Heart right ventricle (tissue), 16 donors: ENCODE measurements at regions of chr13 and their contacts with region 1.

Region 1: GRCh38 chr13:24307211-24308067 is 1.9 kb upstream of the C1QTNF9 start:
- DNase-seq: peak in 1 of 2 donors; percentile 21
- ATAC-seq: peak; percentile 26 to 70 (median 58)
- H3K4me3 ChIP-seq: no peak overlapping the region
- H3K27ac ChIP-seq: peak overlapping the region in 8 of 10 donors; percentile 23 to 80 (median 62)
- H3K4me1 ChIP-seq: peaks cover 0 to 70% (median 29%) of the 10 kb centered on the region in 9 donors
- H3K27me3 ChIP-seq: peaks cover 0 to 3% (median 0%) of the 10 kb centered on the region in 7 donors
- CTCF ChIP-seq: no peak

Region 2: GRCh38 chr13:24270639-24271141 is 36.7 kb before region 1 on chr13:
- intact Hi-C with region 1: loop called in 1 of 10 experiments (anchors 5 kb)
- DNase-seq: peak; percentile 68
- ATAC-seq: peak; percentile 48 to 85 (median 76)
- H3K4me3 ChIP-seq: peak overlapping the region in 9 of 10 donors; percentile 30 to 58 (median 50)
- H3K27ac ChIP-seq: peak overlapping the region; percentile 14 to 94 (median 89)
- H3K4me1 ChIP-seq: peaks cover 4 to 79% (median 69%) of the 10 kb centered on the region in 9 donors
- H3K27me3 ChIP-seq: no peaks in the 10 kb centered on the region
- CTCF ChIP-seq: peak in 1 of 9 donors; percentile 3